Mammary epithelial cell (primary cell): ENCODE measurements at regions of chr5 and their contacts with region 1.

Region 1: DNA sequence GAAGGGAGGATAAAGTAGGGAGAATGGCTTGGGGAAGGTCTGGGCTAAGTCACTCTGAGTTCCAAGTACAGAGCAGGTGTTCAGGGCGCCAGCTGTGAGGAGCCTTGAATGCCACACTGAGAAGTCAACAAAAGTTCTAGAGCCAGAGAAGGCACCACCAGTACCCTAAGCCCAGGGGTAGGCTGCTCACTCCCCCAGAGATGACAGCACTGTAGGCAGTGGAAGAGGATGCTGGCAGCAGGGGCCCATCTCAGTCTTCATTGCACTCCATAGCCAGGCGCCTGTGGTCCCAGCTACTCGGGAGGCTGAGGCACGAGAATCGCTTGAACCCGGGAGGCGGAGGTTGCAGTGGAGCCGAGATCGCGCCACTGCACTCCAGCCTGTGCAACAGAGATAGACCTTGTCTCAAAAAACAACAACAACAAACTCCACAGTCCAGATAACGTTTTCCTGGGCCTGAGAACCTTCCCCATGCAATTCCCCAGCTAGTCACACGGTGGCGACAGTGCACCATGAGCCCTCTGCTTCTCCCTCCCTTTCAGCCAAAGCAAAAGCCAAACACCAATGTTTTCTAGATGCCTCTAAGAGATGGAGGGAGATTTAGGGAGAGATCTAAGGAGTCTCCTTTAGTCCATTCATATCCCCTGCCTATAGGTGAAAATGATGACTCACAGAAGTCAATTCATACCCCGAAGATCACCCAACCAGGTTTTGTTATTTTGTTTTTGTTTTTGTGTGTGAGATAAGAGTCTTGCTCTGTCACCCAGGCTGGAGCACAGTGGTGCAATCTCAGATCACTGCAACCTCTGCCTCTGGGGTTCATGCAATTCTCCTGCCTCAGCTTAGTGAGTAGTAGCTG is 19.8 kb upstream of the NSD1 start:
- DNase-seq: peak; percentile 45
- H3K4me3 ChIP-seq: no peak overlapping the region
- H3K27ac ChIP-seq: no peak overlapping the region
- H3K4me1 ChIP-seq: peaks cover 4% of the 10 kb centered on the region
- H3K27me3 ChIP-seq: no peaks in the 10 kb centered on the region
- CTCF ChIP-seq: peak; percentile 99 to 100

Region 2: GRCh38 chr5:176415952-176416924 is 697.6 kb before region 1 on chr5 and contains the start of gene CLTB:
- CTCF ChIA-PET with region 1: no interaction called
- dilution Hi-C with region 1: no loop called
- in situ Hi-C with region 1: no loop called
- intact Hi-C with region 1: loop called (anchors 5 kb)
- DNase-seq: peak; percentile 82
- H3K4me3 ChIP-seq: peak within 1 kb of the TSS; percentile 58 to 84 (median 80)
- H3K27ac ChIP-seq: peak within 1 kb of the TSS; percentile 72
- H3K4me1 ChIP-seq: peaks cover 60% of the 10 kb centered on the region
- H3K27me3 ChIP-seq: no peaks in the 10 kb centered on the region
- CTCF ChIP-seq: peak; percentile 26 to 55
- total RNA-seq, gene CLTB: 166 to 323 TPM

Region 3: GRCh38 chr5:176916337-176916736 is 197.5 kb before region 1 on chr5:
- CTCF ChIA-PET with region 1: no interaction called
- dilution Hi-C with region 1: no loop called
- in situ Hi-C with region 1: no loop called
- intact Hi-C with region 1: no loop called
- DNase-seq: no peak
- H3K4me3 ChIP-seq: no peak overlapping the region
- H3K27ac ChIP-seq: no peak overlapping the region
- H3K4me1 ChIP-seq: no peaks in the 10 kb centered on the region
- H3K27me3 ChIP-seq: no peaks in the 10 kb centered on the region
- CTCF ChIP-seq: no peak

Region 4: DNA sequence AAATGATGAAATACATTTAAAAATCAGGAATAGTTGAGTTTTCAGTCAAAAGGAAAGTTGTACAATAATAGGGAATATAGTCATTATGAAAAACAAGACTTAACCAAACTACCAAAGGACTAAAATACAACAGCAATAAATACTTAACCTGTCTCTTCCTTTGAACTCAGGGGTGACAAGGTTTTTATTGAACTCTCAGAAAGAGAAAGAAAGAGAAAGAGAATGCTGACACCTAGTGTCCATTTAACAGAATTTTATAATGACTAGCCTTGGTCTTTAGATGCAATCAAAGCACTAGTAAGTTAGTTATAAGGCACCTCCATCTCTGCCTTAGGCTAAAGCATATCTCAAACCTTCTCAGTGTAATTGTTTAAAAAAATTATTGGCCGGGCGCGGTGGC is 154.7 kb before region 1 on chr5:
- CTCF ChIA-PET with region 1: no interaction called
- dilution Hi-C with region 1: no loop called
- in situ Hi-C with region 1: no loop called
- intact Hi-C with region 1: loop called (anchors 2 kb)
- DNase-seq: peak; percentile 14
- H3K4me3 ChIP-seq: no peak overlapping the region
- H3K27ac ChIP-seq: no peak overlapping the region
- H3K4me1 ChIP-seq: peaks cover 12% of the 10 kb centered on the region
- H3K27me3 ChIP-seq: no peaks in the 10 kb centered on the region
- CTCF ChIP-seq: peak; percentile 38 to 40

Region 5: GRCh38 chr5:177029498-177029897 is 84.3 kb before region 1 on chr5:
- CTCF ChIA-PET with region 1: no interaction called
- dilution Hi-C with region 1: no loop called
- in situ Hi-C with region 1: no loop called
- intact Hi-C with region 1: no loop called
- DNase-seq: no peak
- H3K4me3 ChIP-seq: no peak overlapping the region
- H3K27ac ChIP-seq: no peak overlapping the region
- H3K4me1 ChIP-seq: no peaks in the 10 kb centered on the region
- H3K27me3 ChIP-seq: no peaks in the 10 kb centered on the region
- CTCF ChIP-seq: no peak

Region 6: GRCh38 chr5:177099422-177100093 is 14.2 kb before region 1 on chr5:
- CTCF ChIA-PET with region 1: interaction called, 10 read pairs
- dilution Hi-C with region 1: no loop called
- in situ Hi-C with region 1: no loop called
- intact Hi-C with region 1: no loop called
- DNase-seq: no peak
- H3K4me3 ChIP-seq: no peak overlapping the region
- H3K27ac ChIP-seq: no peak overlapping the region
- H3K4me1 ChIP-seq: no peaks in the 10 kb centered on the region
- H3K27me3 ChIP-seq: no peaks in the 10 kb centered on the region
- CTCF ChIP-seq: no peak

Region 7: GRCh38 chr5:177311723-177312648 is 198.2 kb after region 1 on chr5 and contains the start of gene MXD3:
- CTCF ChIA-PET with region 1: no interaction called
- dilution Hi-C with region 1: no loop called
- in situ Hi-C with region 1: no loop called
- intact Hi-C with region 1: loop called (anchors 1 kb)
- DNase-seq: peak; percentile 90
- H3K4me3 ChIP-seq: peak within 1 kb of the TSS; percentile 51 to 75 (median 63)
- H3K27ac ChIP-seq: peak within 1 kb of the TSS; percentile 62
- H3K4me1 ChIP-seq: peaks cover 27% of the 10 kb centered on the region
- H3K27me3 ChIP-seq: no peaks in the 10 kb centered on the region
- CTCF ChIP-seq: no peak
- total RNA-seq, gene MXD3: 0.83 to 10.7 TPM

Region 8: GRCh38 chr5:177454397-177455035 is 340.7 kb after region 1 on chr5:
- CTCF ChIA-PET with region 1: no interaction called
- dilution Hi-C with region 1: no loop called
- in situ Hi-C with region 1: no loop called
- intact Hi-C with region 1: loop called (anchors 1 kb)
- DNase-seq: peak; percentile 85
- H3K4me3 ChIP-seq: peak overlapping the region; percentile 28 to 60 (median 57)
- H3K27ac ChIP-seq: peak overlapping the region; percentile 23
- H3K4me1 ChIP-seq: peaks cover 46% of the 10 kb centered on the region
- H3K27me3 ChIP-seq: no peaks in the 10 kb centered on the region
- CTCF ChIP-seq: peak; percentile 70 to 83